ENCODE measurements at regions of chr9 and their contacts with region 1.

Region 1: DNA sequence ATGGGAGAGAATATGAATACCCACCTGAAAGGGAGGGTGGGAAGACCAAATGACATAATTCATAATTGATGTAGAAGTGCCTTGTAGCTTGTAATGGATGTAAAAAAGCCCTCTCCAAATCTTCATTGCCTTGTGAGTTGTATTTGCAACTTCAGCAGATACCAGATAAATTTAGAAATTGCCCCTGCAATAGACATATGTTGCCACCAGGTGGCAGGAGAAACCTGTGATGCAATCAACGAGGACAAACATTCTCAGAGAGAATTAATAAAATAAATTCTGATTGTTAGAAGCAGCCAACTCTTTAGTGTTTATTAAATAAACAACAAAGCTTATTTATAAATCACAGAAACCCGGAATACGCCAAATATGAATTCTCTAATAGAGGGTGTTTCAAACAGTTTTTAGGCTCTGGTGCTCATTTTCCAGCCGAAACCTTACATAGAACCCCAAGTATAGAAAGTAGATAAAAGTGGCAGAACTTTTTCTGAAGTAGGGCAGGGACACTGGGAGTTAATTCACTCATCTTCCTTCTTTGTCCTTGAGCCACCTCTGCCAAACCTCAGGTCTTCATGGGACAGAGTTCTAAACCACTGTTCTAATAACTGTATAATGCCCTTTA is 147.8 kb downstream of the TMEM38B start:
- DNase-seq: peak; percentile 47
- ATAC-seq: peak; percentile 73; the same call in 1 of the 2 replicates
- H3K4me3 ChIP-seq: no peak overlapping the region
- H3K27ac ChIP-seq: no peak overlapping the region
- H3K4me1 ChIP-seq: no peaks in the 10 kb centered on the region
- H3K27me3 ChIP-seq: no peaks in the 10 kb centered on the region
- CTCF ChIP-seq: peak; percentile 92
- POLR2A ChIP-seq: no peak
- RAD21 ChIP-seq: peak; percentile 73

Region 2: DNA sequence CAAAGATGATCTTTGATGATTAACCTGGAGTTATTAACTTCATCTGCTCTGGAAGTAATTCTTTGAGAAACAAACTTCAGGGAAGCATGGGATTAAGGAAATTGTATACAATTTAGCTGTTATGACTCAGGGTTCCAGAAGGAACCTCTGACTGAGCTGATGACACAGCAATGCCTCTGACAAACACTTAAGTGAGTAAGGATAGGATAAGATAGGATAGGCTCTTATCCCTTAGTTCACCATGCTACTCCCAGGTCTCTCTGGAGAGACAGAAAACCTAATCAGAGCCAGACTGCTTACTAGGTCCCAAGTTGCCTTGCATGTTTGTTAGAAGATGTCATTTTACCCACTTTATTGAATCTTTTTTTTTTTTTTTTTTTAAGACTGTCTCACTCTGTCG is 160.4 kb before region 1 on chr9:
- CTCF ChIA-PET with region 1: no interaction called
- POLR2A ChIA-PET with region 1: no interaction called
- dilution Hi-C with region 1: no loop called
- in situ Hi-C with region 1: no loop called
- intact Hi-C with region 1: no loop called
- DNase-seq: peak; percentile 86
- ATAC-seq: peak; percentile 98
- H3K4me3 ChIP-seq: no peak overlapping the region
- H3K27ac ChIP-seq: no peak overlapping the region
- H3K4me1 ChIP-seq: no peaks in the 10 kb centered on the region
- H3K27me3 ChIP-seq: peaks cover 5% of the 10 kb centered on the region
- CTCF ChIP-seq: no peak
- POLR2A ChIP-seq: no peak
- RAD21 ChIP-seq: no peak

Region 3: DNA sequence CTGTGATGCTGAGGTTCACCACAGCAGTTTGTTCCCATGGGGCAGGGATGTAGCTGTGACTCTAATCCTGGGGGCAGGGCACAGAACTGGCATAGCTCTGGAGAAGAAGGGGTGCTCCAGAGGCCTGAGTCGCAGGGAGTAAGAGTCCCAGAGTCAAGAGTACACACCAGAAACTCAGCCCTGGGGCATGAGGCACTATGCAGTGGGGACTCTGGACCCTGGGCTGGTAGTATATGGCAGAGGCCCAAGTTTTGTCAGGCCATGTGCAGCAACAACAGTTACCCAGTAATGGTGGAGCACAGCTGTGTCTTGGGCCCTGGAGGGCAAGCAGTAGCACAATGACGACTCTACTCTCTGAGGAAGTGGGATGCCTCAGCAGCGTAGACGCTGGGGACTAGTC is 104.9 kb before region 1 on chr9:
- CTCF ChIA-PET with region 1: no interaction called
- POLR2A ChIA-PET with region 1: no interaction called
- dilution Hi-C with region 1: no loop called
- in situ Hi-C with region 1: no loop called
- intact Hi-C with region 1: no loop called
- DNase-seq: no peak
- ATAC-seq: no peak
- H3K4me3 ChIP-seq: no peak overlapping the region
- H3K27ac ChIP-seq: no peak overlapping the region
- H3K4me1 ChIP-seq: no peaks in the 10 kb centered on the region
- H3K27me3 ChIP-seq: no peaks in the 10 kb centered on the region
- CTCF ChIP-seq: no peak
- POLR2A ChIP-seq: no peak
- RAD21 ChIP-seq: no peak

Region 4: GRCh38 chr9:105757496-105758251 is 84.5 kb before region 1 on chr9:
- CTCF ChIA-PET with region 1: no interaction called
- POLR2A ChIA-PET with region 1: no interaction called
- dilution Hi-C with region 1: no loop called
- in situ Hi-C with region 1: no loop called
- intact Hi-C with region 1: no loop called
- DNase-seq: no peak
- ATAC-seq: no peak
- H3K4me3 ChIP-seq: no peak overlapping the region
- H3K27ac ChIP-seq: no peak overlapping the region
- H3K4me1 ChIP-seq: no peaks in the 10 kb centered on the region
- H3K27me3 ChIP-seq: no peaks in the 10 kb centered on the region
- CTCF ChIP-seq: no peak
- POLR2A ChIP-seq: no peak
- RAD21 ChIP-seq: no peak

Region 5: DNA sequence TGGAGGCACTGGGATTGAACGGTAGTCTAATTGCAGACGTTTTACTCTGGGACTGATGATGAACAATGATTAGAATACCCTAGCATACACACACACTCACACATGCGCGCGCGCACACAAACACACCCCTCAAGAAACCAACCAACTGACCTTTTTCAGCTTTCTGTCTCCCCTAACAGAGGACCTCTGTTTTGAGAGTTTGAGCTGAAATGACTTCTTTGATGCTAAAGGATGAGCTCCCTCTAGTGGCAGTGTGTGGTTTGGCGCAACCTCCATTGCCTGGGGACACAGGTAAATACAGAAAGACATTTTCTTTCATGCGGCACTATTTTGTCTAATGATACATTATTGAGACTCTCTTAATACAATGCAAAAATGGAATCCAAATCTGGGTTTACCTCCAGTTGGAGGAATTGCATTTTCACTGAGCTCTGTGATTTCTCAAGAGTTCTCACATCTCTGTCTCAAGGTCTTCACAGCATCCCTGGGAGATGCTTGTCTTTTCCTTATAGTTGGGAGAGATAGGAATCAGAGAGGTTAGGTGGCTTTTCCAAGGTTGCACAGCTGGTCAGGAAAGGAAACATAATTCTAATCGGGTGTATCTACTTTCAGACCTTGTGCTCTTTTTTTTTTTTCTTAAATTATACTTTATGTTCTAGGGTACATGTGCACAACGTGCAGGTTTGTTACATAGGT is 39.7 kb after region 1 on chr9:
- CTCF ChIA-PET with region 1: interaction called, 18 read pairs
- POLR2A ChIA-PET with region 1: no interaction called
- dilution Hi-C with region 1: no loop called
- in situ Hi-C with region 1: no loop called
- intact Hi-C with region 1: loop called (anchors 1 kb)
- DNase-seq: peak; percentile 53
- ATAC-seq: peak; percentile 72
- H3K4me3 ChIP-seq: no peak overlapping the region
- H3K27ac ChIP-seq: no peak overlapping the region
- H3K4me1 ChIP-seq: no peaks in the 10 kb centered on the region
- H3K27me3 ChIP-seq: no peaks in the 10 kb centered on the region
- CTCF ChIP-seq: peak; percentile 68
- POLR2A ChIP-seq: no peak
- RAD21 ChIP-seq: peak; percentile 51

Region 6: GRCh38 chr9:106127771-106128170 is 285.6 kb after region 1 on chr9:
- CTCF ChIA-PET with region 1: no interaction called
- POLR2A ChIA-PET with region 1: no interaction called
- dilution Hi-C with region 1: no loop called
- in situ Hi-C with region 1: no loop called
- intact Hi-C with region 1: no loop called
- DNase-seq: no peak
- ATAC-seq: no peak
- H3K4me3 ChIP-seq: no peak overlapping the region
- H3K27ac ChIP-seq: no peak overlapping the region
- H3K4me1 ChIP-seq: no peaks in the 10 kb centered on the region
- H3K27me3 ChIP-seq: no peaks in the 10 kb centered on the region
- CTCF ChIP-seq: no peak
- POLR2A ChIP-seq: no peak
- RAD21 ChIP-seq: no peak

Region 7: GRCh38 chr9:107172160-107172978 is 1330.2 kb after region 1 on chr9:
- CTCF ChIA-PET with region 1: interaction called, 4 read pairs
- POLR2A ChIA-PET with region 1: no interaction called
- dilution Hi-C with region 1: no loop called
- in situ Hi-C with region 1: loop called (anchors 25 kb)
- intact Hi-C with region 1: loop called (anchors 1 kb)
- DNase-seq: peak; percentile 78
- ATAC-seq: peak; percentile 93
- H3K4me3 ChIP-seq: no peak overlapping the region
- H3K27ac ChIP-seq: no peak overlapping the region
- H3K4me1 ChIP-seq: peaks cover 2% of the 10 kb centered on the region; the same call in 1 of the 2 replicates
- H3K27me3 ChIP-seq: peaks cover 2% of the 10 kb centered on the region; the same call in 1 of the 2 replicates
- CTCF ChIP-seq: peak; percentile 85
- POLR2A ChIP-seq: no peak
- RAD21 ChIP-seq: peak; percentile 92

Measured in IMR-90 (cell line).